CD8-positive, alpha-beta memory T cell (primary cell): ENCODE measurements at regions of chr1 and their contacts with region 1.

Region 1: DNA sequence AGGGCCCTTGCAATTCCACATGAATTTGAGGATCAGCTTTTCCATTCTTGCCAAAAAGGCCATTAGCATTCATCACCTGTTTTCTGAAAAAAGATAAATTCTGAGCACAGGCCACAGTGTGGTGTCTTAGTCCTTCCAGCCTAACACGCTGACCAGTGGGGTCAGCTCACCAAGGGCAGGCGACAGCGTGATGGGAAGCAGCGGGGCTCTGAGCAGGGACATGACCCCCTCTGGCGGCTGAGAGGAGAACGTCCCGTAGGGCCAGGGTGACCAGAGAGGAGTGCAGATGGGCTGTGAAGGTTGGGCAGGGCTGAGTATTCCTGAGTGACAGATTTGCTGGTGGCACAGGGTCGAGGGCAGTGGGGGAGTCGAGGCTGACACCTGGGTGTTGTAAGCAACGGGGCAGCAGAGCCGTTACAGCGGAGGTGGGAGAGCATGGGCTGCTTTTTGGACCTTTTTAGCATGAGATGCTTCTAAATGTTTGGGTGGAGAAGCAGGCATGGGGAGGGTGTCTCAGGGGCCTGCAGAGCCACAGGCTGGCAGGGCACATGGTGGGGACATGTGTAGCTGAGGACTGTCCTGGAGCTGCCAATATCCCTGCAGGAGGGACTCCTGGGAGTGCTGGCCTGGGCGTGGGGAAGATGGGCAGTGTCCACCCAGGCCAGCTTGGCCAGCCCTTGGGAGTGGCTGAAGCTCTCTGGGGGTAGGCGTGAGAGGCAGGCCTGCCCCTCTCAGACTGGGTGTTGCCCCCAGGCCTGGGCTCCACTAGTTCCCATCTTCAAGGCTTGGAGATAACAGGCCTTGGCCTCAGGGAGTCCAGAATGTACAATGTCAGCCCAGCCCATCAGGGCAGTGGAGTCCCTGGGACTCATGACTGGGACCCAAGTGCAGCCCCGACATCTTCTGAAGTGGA is 8.6 kb upstream of the CALML6 start:
- DNase-seq: peak; percentile 42 to 72 (median 55)
- H3K4me3 ChIP-seq: no peak overlapping the region
- H3K4me3 Mint-ChIP-seq: peak overlapping the region; percentile 12 to 90 (median 61)
- H3K27ac ChIP-seq: no peak overlapping the region
- H3K27ac Mint-ChIP-seq: peak overlapping the region in 7 of 8 donors; percentile 27 to 84 (median 68)
- H3K4me1 ChIP-seq: peaks cover 11% of the 10 kb centered on the region
- H3K4me1 Mint-ChIP-seq: peaks cover 14 to 20% (median 14%) of the 10 kb centered on the region in 3 donors
- H3K27me3 ChIP-seq: no peaks in the 10 kb centered on the region
- H3K27me3 Mint-ChIP-seq: peaks cover 4 to 5% of the 10 kb centered on the region in 2 donors

Region 2: DNA sequence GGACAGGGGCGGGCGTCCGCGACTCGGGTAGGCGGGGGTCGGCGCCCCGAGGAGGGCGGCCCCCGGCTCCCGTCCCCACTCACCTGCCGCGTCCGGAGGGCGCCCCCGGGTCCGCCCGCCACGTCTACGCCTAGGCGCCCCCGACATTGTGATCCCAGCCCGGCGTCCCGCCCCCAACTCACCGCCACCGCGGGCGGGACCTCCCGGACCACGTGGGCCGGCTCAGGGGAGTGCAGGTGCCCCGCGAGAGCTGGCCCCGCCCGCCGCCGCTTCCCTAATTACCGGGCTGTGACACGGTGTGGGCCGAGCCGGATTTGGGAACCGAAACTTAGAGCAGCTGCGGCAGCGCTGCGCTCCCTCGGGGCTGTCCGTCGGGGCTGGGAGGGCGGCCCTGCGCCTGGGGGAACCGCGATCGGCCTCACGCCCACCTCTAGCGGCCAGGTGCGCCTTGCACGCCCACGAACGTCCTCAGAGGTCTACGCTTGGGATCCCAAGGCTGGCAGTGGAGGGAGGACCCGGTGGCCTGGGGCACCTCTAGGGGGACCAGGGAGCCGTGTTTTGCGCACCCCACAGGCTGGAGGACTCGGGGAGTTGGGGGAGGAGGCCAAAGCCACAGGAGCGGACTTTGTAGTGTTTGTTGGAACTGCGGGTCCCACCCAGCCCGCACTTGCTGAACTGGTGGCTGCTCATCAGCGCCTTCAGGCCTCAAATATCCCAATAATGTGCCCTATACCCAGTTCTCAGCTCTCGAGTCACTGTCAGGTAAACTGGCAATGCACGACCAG is 127.6 kb before region 1 on chr1:
- CTCF ChIA-PET with region 1: interaction called, 13 read pairs
- POLR2A ChIA-PET with region 1: interaction called, 15 read pairs
- DNase-seq: peak; percentile 73 to 86 (median 78)
- H3K4me3 ChIP-seq: peak overlapping the region; percentile 65
- H3K4me3 Mint-ChIP-seq: peak overlapping the region; percentile 85 to 94 (median 88)
- H3K27ac ChIP-seq: peak overlapping the region; percentile 80
- H3K27ac Mint-ChIP-seq: peak overlapping the region; percentile 87 to 99 (median 95)
- H3K4me1 ChIP-seq: peaks cover 75% of the 10 kb centered on the region
- H3K4me1 Mint-ChIP-seq: peaks cover 62 to 74% (median 63%) of the 10 kb centered on the region in 3 donors
- H3K27me3 ChIP-seq: no peaks in the 10 kb centered on the region
- H3K27me3 Mint-ChIP-seq: peaks cover 0 to 2% of the 10 kb centered on the region in 2 donors

Region 3: DNA sequence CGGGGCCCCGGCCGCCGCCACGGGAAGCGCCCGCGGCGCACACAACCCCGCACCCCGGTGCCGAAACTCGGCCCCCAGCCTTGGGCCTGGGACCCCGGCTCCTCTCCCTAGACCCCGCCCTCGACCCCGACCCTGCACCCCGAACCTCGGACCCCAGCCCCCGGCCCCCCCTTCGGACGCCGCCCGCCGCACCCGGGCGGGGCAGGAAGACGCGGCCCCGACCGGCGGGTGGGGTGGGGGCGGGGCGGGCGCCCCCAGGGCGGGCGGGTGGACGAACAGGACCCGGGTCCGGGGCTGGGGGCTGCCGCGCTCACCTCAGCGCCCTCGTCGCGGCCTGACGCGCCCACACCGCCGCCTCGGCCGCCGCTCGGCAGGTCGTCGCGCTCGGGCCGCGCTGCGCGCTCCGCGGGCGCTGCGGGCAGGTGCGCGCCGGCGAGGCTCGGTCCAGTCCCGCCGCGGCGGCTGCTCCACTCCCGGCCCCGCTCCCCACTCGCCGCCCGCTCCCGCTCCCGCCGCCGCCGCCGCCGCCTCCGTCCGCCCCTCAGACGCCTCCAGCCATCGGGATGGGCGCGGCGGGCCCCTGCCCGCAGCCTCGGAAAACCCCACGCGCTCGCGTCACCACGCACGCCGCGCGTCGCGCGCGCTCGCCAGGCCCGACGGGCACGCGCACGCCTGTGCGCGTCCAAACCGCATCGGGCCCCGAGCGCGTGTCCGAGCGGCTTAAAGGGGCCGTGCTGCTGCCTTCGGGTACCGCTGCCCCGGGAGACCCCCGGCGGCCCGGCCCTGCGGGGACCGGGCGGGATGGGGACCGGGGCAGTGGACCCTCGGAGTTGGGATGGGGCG is 15.7 kb before region 1 on chr1 and contains the start of gene GNB1:
- CTCF ChIA-PET with region 1: interaction called, 20 read pairs
- POLR2A ChIA-PET with region 1: interaction called, 12 read pairs
- DNase-seq: peak; percentile 83 to 92 (median 90)
- H3K4me3 ChIP-seq: peak within 1 kb of the TSS; percentile 63
- H3K4me3 Mint-ChIP-seq: peak within 1 kb of the TSS; percentile 79 to 95 (median 92)
- H3K27ac ChIP-seq: peak within 1 kb of the TSS; percentile 84
- H3K27ac Mint-ChIP-seq: peak within 1 kb of the TSS; percentile 92 to 99 (median 96)
- H3K4me1 ChIP-seq: peaks cover 66% of the 10 kb centered on the region
- H3K4me1 Mint-ChIP-seq: peaks cover 51 to 70% (median 62%) of the 10 kb centered on the region in 3 donors
- H3K27me3 ChIP-seq: no peaks in the 10 kb centered on the region
- H3K27me3 Mint-ChIP-seq: peaks cover 4% of the 10 kb centered on the region in 2 donors
- total RNA-seq, gene GNB1: 436 to 470 TPM

Region 4: GRCh38 chr1:1959840-1960479 is 53.5 kb after region 1 on chr1:
- CTCF ChIA-PET with region 1: no interaction called
- POLR2A ChIA-PET with region 1: no interaction called
- DNase-seq: peak; percentile 20 to 60 (median 30)
- H3K4me3 ChIP-seq: no peak overlapping the region
- H3K4me3 Mint-ChIP-seq: no peak overlapping the region
- H3K27ac ChIP-seq: no peak overlapping the region
- H3K27ac Mint-ChIP-seq: no peak overlapping the region
- H3K4me1 ChIP-seq: no peaks in the 10 kb centered on the region
- H3K4me1 Mint-ChIP-seq: no peaks in the 10 kb centered on the region
- H3K27me3 ChIP-seq: peaks cover 5% of the 10 kb centered on the region
- H3K27me3 Mint-ChIP-seq: peaks cover 20 to 37% of the 10 kb centered on the region in 2 donors